IMR-90 (cell line): ENCODE measurements at regions of chr10 and their contacts with region 1.

Region 1: GRCh38 chr10:84820120-84820519 is 491.7 kb downstream of the CCSER2 start:
- DNase-seq: no peak
- ATAC-seq: no peak
- H3K4me3 ChIP-seq: no peak overlapping the region
- H3K27ac ChIP-seq: no peak overlapping the region
- H3K4me1 ChIP-seq: no peaks in the 10 kb centered on the region
- H3K27me3 ChIP-seq: no peaks in the 10 kb centered on the region
- CTCF ChIP-seq: 0 out of 2 replicates have a peak, but pooled peaks have one; percentile 8
- POLR2A ChIP-seq: no peak
- RAD21 ChIP-seq: no peak

Region 2: GRCh38 chr10:84537447-84537931 is 282.6 kb before region 1 on chr10:
- CTCF ChIA-PET with region 1: no interaction called
- POLR2A ChIA-PET with region 1: no interaction called
- dilution Hi-C with region 1: no loop called
- in situ Hi-C with region 1: no loop called
- intact Hi-C with region 1: no loop called
- DNase-seq: peak; percentile 59
- ATAC-seq: peak; percentile 63
- H3K4me3 ChIP-seq: no peak overlapping the region
- H3K27ac ChIP-seq: no peak overlapping the region
- H3K4me1 ChIP-seq: peaks cover 8% of the 10 kb centered on the region
- H3K27me3 ChIP-seq: no peaks in the 10 kb centered on the region
- CTCF ChIP-seq: peak; percentile 92
- POLR2A ChIP-seq: no peak
- RAD21 ChIP-seq: peak; percentile 95

Region 3: DNA sequence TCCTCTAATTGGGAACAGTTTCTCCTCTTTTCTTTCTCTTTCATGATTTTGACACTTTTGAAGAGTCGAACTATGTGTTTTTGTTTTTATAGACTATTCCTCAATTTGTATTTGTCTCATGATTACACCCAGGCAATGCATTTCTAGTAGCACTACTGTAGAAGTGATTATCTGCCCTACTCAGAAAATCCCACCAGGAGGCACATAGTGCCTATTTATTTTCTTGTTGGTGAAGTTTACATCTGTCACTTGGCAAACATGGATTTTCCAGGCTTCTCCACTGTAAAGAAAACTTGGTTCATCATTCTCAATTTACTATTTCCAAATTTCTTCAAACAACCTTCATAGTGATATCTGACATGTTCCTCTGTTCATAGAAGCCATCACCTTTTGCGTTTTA is 402.2 kb after region 1 on chr10:
- CTCF ChIA-PET with region 1: no interaction called
- POLR2A ChIA-PET with region 1: no interaction called
- dilution Hi-C with region 1: no loop called
- in situ Hi-C with region 1: no loop called
- intact Hi-C with region 1: no loop called
- DNase-seq: no peak
- ATAC-seq: no peak
- H3K4me3 ChIP-seq: no peak overlapping the region
- H3K27ac ChIP-seq: no peak overlapping the region
- H3K4me1 ChIP-seq: no peaks in the 10 kb centered on the region
- H3K27me3 ChIP-seq: no peaks in the 10 kb centered on the region
- CTCF ChIP-seq: no peak
- POLR2A ChIP-seq: no peak
- RAD21 ChIP-seq: no peak

Region 4: GRCh38 chr10:86289577-86289868 is 1469.4 kb after region 1 on chr10:
- CTCF ChIA-PET with region 1: interaction called, 11 read pairs
- POLR2A ChIA-PET with region 1: no interaction called
- dilution Hi-C with region 1: no loop called
- in situ Hi-C with region 1: no loop called
- intact Hi-C with region 1: no loop called
- DNase-seq: no peak
- ATAC-seq: no peak
- H3K4me3 ChIP-seq: no peak overlapping the region
- H3K27ac ChIP-seq: no peak overlapping the region
- H3K4me1 ChIP-seq: no peaks in the 10 kb centered on the region
- H3K27me3 ChIP-seq: no peaks in the 10 kb centered on the region
- CTCF ChIP-seq: no peak
- POLR2A ChIP-seq: no peak
- RAD21 ChIP-seq: no peak